HEK293 (cell line): ENCODE measurements at regions of chr3 and their contacts with region 1.

Region 1: GRCh38 chr3:15332405-15333098 is at the start of gene SH3BP5:
- H3K4me3 ChIP-seq: peak within 1 kb of the TSS; percentile 79
- H3K27ac ChIP-seq: peak within 1 kb of the TSS; percentile 24; the same call in 1 of the 2 replicates
- H3K4me1 ChIP-seq: peaks cover 14% of the 10 kb centered on the region
- CTCF ChIP-seq: peak; percentile 36; the same call in 1 of the 2 replicates

Region 2: GRCh38 chr3:15319575-15319974 is 13.0 kb before region 1 on chr3:
- CTCF ChIA-PET with region 1: interaction called, 14 read pairs
- POLR2A ChIA-PET with region 1: interaction called, 5 read pairs
- H3K4me3 ChIP-seq: no peak overlapping the region
- H3K27ac ChIP-seq: no peak overlapping the region
- H3K4me1 ChIP-seq: peaks cover 16% of the 10 kb centered on the region
- CTCF ChIP-seq: no peak

Region 3: GRCh38 chr3:15342945-15343344 is 10.4 kb after region 1 on chr3:
- CTCF ChIA-PET with region 1: interaction called, 14 read pairs
- POLR2A ChIA-PET with region 1: interaction called, 3 read pairs
- H3K4me3 ChIP-seq: no peak overlapping the region
- H3K27ac ChIP-seq: no peak overlapping the region
- H3K4me1 ChIP-seq: no peaks in the 10 kb centered on the region
- CTCF ChIP-seq: no peak